ENCODE measurements at regions of chr6 and their contacts with region 1.

Region 1: DNA sequence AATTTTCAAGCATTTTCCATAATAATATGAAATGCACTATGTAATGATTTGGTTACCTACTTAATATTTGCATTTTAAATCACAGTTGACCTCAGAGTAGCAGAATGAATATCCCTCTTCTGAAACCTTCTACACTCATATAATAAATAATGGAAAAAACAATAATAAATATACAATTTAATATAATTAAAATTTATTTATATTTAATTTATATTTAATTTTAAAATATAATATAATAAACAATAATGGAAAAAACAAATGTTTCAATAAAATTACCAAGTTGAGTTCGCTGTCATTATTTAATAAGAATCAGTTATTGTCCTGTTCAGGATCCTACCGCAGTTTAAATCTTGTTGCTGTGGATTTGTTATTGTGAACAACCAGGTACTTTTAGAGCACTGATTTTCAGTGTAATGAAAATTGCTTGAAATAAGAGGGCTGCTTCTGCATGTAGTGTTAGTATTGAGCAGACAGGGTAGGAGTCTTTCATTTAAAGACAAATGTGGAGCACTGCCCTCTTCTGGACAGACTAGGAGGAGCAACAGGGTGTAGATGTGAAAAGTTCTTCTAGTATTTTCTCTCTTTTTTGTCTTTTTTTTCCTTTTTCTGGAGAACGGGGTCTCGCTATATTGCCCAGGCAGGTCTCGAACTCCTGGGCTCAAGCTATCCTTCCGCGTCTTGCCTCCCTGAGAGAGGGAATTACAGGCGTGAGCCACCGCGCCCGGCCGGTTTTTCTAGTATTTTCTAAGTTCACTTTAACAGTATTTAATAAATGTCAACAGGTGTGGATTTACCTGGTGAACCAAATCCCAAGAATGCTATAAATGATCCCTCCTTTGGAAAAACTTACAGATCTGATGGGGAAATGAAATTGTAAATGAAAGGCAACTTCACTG is 13.6 kb downstream of the TRAPPC3L start:
- DNase-seq: peak; percentile 12 to 76 (median 61)
- ATAC-seq: peak; percentile 98
- H3K4me3 ChIP-seq: no peak overlapping the region
- H3K4me3 Mint-ChIP-seq: no peak overlapping the region
- H3K27ac ChIP-seq: no peak overlapping the region
- H3K27ac Mint-ChIP-seq: no peak overlapping the region
- H3K4me1 ChIP-seq: no peaks in the 10 kb centered on the region
- H3K4me1 Mint-ChIP-seq: no peaks in the 10 kb centered on the region
- H3K27me3 ChIP-seq: no peaks in the 10 kb centered on the region
- H3K27me3 Mint-ChIP-seq: peaks cover 15 to 56% (median 32%) of the 10 kb centered on the region in 5 donors

Region 2: DNA sequence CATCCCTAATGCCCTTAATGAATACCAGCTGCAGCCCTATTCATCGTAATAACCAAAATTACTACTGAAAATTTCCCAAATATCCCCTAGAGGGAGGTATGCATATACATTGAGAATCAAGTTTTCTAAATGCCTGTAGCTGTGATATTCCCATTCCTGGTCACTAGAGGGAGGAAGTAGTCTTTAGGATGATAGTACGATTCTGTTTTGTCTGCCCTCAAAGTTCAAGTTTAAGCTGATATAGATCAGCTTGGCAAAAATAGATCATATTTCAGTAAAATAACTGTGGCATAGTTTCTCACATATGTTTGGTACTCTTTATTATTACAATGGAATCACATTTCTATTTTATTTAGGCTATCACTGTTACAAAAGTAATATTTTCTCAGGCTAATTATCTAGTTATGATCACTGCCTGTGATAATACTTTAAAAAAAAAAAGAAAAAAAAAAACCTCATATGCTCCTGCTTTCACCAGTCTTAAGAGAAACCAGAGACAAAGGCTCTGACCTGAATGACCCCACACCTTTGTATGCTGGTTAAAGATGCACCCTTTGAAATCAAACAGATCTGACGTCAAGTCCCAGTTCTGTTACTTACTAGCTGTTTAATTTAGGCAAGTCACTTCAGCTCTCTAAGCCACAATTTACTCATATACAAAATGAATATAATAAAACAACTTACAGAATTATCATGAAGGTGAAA is 263.2 kb before region 1 on chr6:
- CTCF ChIA-PET with region 1: interaction called, 23 read pairs
- POLR2A ChIA-PET with region 1: no interaction called
- intact Hi-C with region 1: loop called in 1 of 2 experiments (anchors 1 kb)
- DNase-seq: peak in 7 of 9 donors; percentile 21 to 54 (median 49)
- ATAC-seq: peak; percentile 93
- H3K4me3 ChIP-seq: no peak overlapping the region
- H3K4me3 Mint-ChIP-seq: no peak overlapping the region
- H3K27ac ChIP-seq: peak overlapping the region; percentile 6
- H3K27ac Mint-ChIP-seq: peak overlapping the region in 7 of 9 donors; percentile 1 to 60 (median 23)
- H3K4me1 ChIP-seq: no peaks in the 10 kb centered on the region
- H3K4me1 Mint-ChIP-seq: peaks cover 8 to 56% (median 49%) of the 10 kb centered on the region in 7 donors
- H3K27me3 ChIP-seq: no peaks in the 10 kb centered on the region
- H3K27me3 Mint-ChIP-seq: no peaks in the 10 kb centered on the region

Region 3: GRCh38 chr6:116371120-116371917 is 160.6 kb before region 1 on chr6:
- CTCF ChIA-PET with region 1: no interaction called
- POLR2A ChIA-PET with region 1: no interaction called
- intact Hi-C with region 1: loop called in 1 of 2 experiments (anchors 2 kb)
- DNase-seq: peak in 8 of 9 donors; percentile 1 to 49 (median 27)
- ATAC-seq: peak; percentile 59
- H3K4me3 ChIP-seq: peak overlapping the region; percentile 64
- H3K4me3 Mint-ChIP-seq: peak overlapping the region; percentile 76 to 93 (median 86)
- H3K27ac ChIP-seq: no peak overlapping the region
- H3K27ac Mint-ChIP-seq: no peak overlapping the region
- H3K4me1 ChIP-seq: peaks cover 9 to 10% of the 10 kb centered on the region in 2 donors
- H3K4me1 Mint-ChIP-seq: peaks cover 9 to 18% (median 11%) of the 10 kb centered on the region in 7 donors
- H3K27me3 ChIP-seq: no peaks in the 10 kb centered on the region
- H3K27me3 Mint-ChIP-seq: peaks cover 5 to 71% (median 23%) of the 10 kb centered on the region in 5 donors

Region 4: GRCh38 chr6:116411284-116411623 is 120.7 kb before region 1 on chr6:
- CTCF ChIA-PET with region 1: no interaction called
- POLR2A ChIA-PET with region 1: no interaction called
- intact Hi-C with region 1: no loop called
- DNase-seq: no peak
- ATAC-seq: no peak
- H3K4me3 ChIP-seq: no peak overlapping the region
- H3K4me3 Mint-ChIP-seq: no peak overlapping the region
- H3K27ac ChIP-seq: no peak overlapping the region
- H3K27ac Mint-ChIP-seq: no peak overlapping the region
- H3K4me1 ChIP-seq: no peaks in the 10 kb centered on the region
- H3K4me1 Mint-ChIP-seq: peaks cover 0 to 5% (median 0%) of the 10 kb centered on the region in 7 donors
- H3K27me3 ChIP-seq: no peaks in the 10 kb centered on the region
- H3K27me3 Mint-ChIP-seq: peaks cover 0 to 13% (median 5%) of the 10 kb centered on the region in 5 donors

Region 5: DNA sequence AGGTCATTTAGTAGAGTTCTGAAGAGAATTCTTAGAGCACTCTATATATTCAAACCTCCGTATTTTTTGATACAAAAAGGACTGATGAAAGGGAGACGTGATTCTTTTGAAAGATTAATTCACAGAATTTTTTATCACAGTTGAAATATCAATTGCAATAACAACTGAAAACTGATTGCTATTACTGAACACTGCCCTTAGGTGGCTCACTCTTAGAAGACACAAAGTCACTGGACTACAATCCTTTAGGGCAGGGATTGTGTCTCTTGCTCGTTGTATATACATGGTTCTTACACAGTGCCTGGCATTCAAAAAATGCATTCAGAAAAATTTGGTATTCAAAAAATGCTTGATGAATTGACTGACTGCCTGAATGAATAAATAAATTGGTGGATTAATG is 87.8 kb before region 1 on chr6:
- CTCF ChIA-PET with region 1: interaction called, 4 read pairs
- POLR2A ChIA-PET with region 1: no interaction called
- intact Hi-C with region 1: loop called (anchors 1 kb)
- DNase-seq: peak in 3 of 9 donors; percentile 7 to 27 (median 20)
- ATAC-seq: peak; percentile 76
- H3K4me3 ChIP-seq: no peak overlapping the region
- H3K4me3 Mint-ChIP-seq: peak overlapping the region in 1 of 10 donors; percentile 36
- H3K27ac ChIP-seq: no peak overlapping the region
- H3K27ac Mint-ChIP-seq: peak overlapping the region in 1 of 9 donors; percentile 25
- H3K4me1 ChIP-seq: peaks cover 0 to 4% of the 10 kb centered on the region in 2 donors
- H3K4me1 Mint-ChIP-seq: peaks cover 0 to 32% (median 0%) of the 10 kb centered on the region in 7 donors
- H3K27me3 ChIP-seq: no peaks in the 10 kb centered on the region
- H3K27me3 Mint-ChIP-seq: peaks cover 8 to 28% (median 20%) of the 10 kb centered on the region in 5 donors

Region 6: DNA sequence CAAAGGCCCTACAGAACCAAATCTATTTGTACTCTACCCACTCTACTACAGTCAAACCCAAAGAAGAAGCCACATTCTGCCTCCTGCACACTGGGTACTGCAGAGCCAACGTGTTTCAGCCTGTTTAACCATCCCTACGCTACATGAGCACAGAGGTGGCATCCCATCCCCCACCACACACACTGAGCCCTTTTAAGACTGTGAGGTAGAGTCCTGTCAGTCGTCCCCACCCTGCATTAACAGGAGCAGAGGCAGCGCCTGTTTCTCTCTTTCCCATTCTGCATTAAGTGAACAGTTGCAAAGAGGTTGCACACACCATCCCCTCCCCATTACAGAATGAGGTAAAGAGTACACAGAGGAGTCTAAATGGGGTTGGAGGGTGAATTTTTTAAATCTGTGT is 79.1 kb after region 1 on chr6:
- CTCF ChIA-PET with region 1: no interaction called
- POLR2A ChIA-PET with region 1: no interaction called
- intact Hi-C with region 1: no loop called
- DNase-seq: no peak
- ATAC-seq: no peak
- H3K4me3 ChIP-seq: no peak overlapping the region
- H3K4me3 Mint-ChIP-seq: no peak overlapping the region
- H3K27ac ChIP-seq: no peak overlapping the region
- H3K27ac Mint-ChIP-seq: no peak overlapping the region
- H3K4me1 ChIP-seq: no peaks in the 10 kb centered on the region
- H3K4me1 Mint-ChIP-seq: peaks cover 0 to 8% (median 4%) of the 10 kb centered on the region in 7 donors
- H3K27me3 ChIP-seq: no peaks in the 10 kb centered on the region
- H3K27me3 Mint-ChIP-seq: peaks cover 0 to 32% (median 11%) of the 10 kb centered on the region in 5 donors

Region 7: GRCh38 chr6:116648156-116648555 is 116.2 kb after region 1 on chr6:
- CTCF ChIA-PET with region 1: interaction called, 3 read pairs
- POLR2A ChIA-PET with region 1: no interaction called
- intact Hi-C with region 1: loop called (anchors 1 kb)
- DNase-seq: no peak
- ATAC-seq: no peak
- H3K4me3 ChIP-seq: no peak overlapping the region
- H3K4me3 Mint-ChIP-seq: no peak overlapping the region
- H3K27ac ChIP-seq: no peak overlapping the region
- H3K27ac Mint-ChIP-seq: peak overlapping the region in 1 of 9 donors; percentile 8
- H3K4me1 ChIP-seq: no peaks in the 10 kb centered on the region
- H3K4me1 Mint-ChIP-seq: peaks cover 0 to 13% (median 9%) of the 10 kb centered on the region in 7 donors
- H3K27me3 ChIP-seq: no peaks in the 10 kb centered on the region
- H3K27me3 Mint-ChIP-seq: no peaks in the 10 kb centered on the region